Activated T-helper 1 cell treated with anti-CD3 and anti-CD28 coated beads, Interleukin-12 subunit alpha, Interleukin-12 subunit beta, Interleukin-2, Interleukin-4 antibody, amounts not matched to agents 30 ng/mL and 10 ng/mL and 1 ng/mL, durations not matched to agents 14 hours and 24 hours and 36 hours (primary cell): ENCODE measurements at regions of chr16 and their contacts with region 1.

Region 1: GRCh38 chr16:53726625-53727024 is 22.7 kb downstream of the FTO start:
- DNase-seq: no peak
- H3K4me3 Mint-ChIP-seq: no peak overlapping the region
- H3K27ac Mint-ChIP-seq: no peak overlapping the region
- H3K4me1 Mint-ChIP-seq: no peaks in the 10 kb centered on the region
- H3K27me3 Mint-ChIP-seq: no peaks in the 10 kb centered on the region

Region 2: DNA sequence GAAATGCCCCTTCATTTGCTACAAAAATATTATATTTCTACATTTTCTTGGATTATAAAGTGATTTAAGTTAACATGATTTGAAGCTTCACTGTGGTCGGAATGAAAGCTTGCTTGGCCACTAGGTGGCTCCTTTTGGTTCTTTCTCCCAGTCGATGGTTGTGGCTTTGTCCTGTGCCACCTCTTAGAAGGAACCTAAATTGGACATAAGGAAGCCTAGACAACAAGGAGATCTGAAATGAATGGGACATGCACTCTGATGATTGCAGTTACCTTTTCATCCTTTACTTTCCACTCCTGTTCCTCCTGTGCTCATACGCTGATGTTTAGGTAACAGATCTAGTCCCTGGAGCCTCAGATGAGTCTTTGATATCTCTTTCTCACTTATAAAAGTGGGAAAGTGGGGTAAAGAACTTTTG is 16.5 kb after region 1 on chr16:
- intact Hi-C with region 1: loop called (anchors 2 kb)
- DNase-seq: no peak
- H3K4me3 Mint-ChIP-seq: no peak overlapping the region
- H3K27ac Mint-ChIP-seq: no peak overlapping the region
- H3K4me1 Mint-ChIP-seq: peaks cover 31% of the 10 kb centered on the region
- H3K27me3 Mint-ChIP-seq: no peaks in the 10 kb centered on the region